ENCODE measurements at regions of chr5 and their contacts with region 1.

Region 1: GRCh38 chr5:151270599-151270998 is 17.6 kb downstream of the GM2A start:
- DNase-seq: peak; percentile 64
- CTCF ChIP-seq: no peak

Region 2: DNA sequence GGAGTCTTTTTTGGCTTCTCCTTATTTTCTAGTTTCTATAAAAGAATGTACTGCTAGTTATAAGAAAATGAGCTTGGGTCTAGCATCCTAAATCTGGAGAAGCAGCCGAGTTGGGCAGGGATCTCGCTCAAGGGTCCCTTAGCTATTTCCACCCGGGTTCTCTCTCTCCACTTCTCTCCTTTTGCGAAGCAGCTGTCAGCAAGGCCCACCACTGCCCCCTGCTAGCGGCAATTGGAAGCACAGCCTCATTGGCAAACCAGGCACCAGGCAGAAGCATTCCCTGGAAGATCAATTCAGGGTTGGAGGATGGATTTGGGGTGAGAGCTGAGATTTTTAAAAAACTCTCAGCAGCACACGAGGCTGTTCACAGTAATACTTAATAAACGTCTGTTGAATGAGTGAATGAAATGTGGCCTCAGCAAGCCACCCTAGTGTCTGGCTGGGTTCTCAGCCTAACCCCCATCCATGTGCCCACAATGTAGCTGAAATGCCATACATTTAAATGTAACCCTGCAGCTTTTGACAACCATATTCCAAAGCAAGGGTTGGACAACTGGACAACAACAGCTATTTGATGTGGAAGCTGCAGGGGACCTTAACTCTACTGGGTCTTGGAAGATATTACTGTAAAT is 155.2 kb before region 1 on chr5:
- CTCF ChIA-PET with region 1: no interaction called
- POLR2A ChIA-PET with region 1: no interaction called
- DNase-seq: peak; percentile 69
- CTCF ChIP-seq: peak; percentile 93

Region 3: GRCh38 chr5:151213800-151214613 is 56.6 kb before region 1 on chr5:
- CTCF ChIA-PET with region 1: no interaction called
- POLR2A ChIA-PET with region 1: interaction called, 14 read pairs
- DNase-seq: peak; percentile 90
- CTCF ChIP-seq: no peak

Measured in GM10248 (cell line).